PC-3 (cell line): ENCODE measurements at regions of chr7 and their contacts with region 1.

Region 1: DNA sequence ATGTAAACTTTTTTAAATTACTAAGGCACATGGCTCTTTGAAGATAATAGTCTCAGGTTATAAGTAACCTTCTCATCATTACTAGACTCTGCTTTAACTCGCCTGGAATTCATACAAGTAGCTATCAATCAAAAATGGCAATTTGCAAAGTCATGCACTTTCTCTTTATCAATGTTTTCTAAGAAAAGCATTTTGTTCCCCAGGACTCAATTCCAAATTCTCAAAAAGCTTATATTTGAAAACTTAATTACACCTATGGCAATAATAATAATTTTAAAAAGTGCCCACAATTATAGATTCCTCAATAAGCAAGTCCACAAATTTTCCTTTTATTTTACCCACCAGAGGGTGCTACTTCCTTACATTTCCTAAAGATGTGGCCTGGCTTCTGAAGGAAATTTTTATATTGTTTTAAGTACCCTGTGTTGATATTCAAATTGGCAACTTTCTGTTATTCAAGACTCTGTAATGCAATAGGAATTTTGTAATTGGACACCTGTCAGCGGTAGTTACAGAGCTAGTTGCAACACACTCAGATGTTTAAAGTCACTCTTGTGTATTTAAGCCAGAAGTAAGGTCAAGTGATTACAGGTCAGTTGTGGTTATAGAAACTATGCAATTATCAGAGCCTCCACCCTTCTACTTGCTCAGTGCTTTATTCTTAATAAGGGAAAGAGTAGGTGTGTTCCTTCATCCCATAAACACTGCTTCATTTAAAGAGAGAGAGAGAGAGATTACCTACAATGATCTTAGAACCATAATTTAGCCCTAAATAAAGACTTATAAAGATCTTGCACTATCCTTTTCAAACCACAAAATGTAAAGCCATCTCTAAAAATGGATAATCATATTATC is 47.1 kb upstream of the HYAL4 start:
- DNase-seq: peak; percentile 94
- ATAC-seq: peak; percentile 89
- H3K4me3 ChIP-seq: peak overlapping the region; percentile 35; the same call in 1 of the 2 replicates
- H3K27ac ChIP-seq: 0 out of 2 replicates have a peak overlapping the region, but pooled peaks have one; percentile 8
- H3K4me1 ChIP-seq: peaks cover 19% of the 10 kb centered on the region
- H3K27me3 ChIP-seq: no peaks in the 10 kb centered on the region
- CTCF ChIP-seq: peak; percentile 84

Region 2: GRCh38 chr7:123580406-123581161 is 217.3 kb before region 1 on chr7:
- CTCF ChIA-PET with region 1: no interaction called
- POLR2A ChIA-PET with region 1: no interaction called
- intact Hi-C with region 1: loop called (anchors 5 kb)
- DNase-seq: peak; percentile 70
- ATAC-seq: peak; percentile 94
- H3K4me3 ChIP-seq: no peak overlapping the region
- H3K27ac ChIP-seq: no peak overlapping the region
- H3K4me1 ChIP-seq: no peaks in the 10 kb centered on the region
- H3K27me3 ChIP-seq: peaks cover 25% of the 10 kb centered on the region
- CTCF ChIP-seq: peak; percentile 87

Region 3: DNA sequence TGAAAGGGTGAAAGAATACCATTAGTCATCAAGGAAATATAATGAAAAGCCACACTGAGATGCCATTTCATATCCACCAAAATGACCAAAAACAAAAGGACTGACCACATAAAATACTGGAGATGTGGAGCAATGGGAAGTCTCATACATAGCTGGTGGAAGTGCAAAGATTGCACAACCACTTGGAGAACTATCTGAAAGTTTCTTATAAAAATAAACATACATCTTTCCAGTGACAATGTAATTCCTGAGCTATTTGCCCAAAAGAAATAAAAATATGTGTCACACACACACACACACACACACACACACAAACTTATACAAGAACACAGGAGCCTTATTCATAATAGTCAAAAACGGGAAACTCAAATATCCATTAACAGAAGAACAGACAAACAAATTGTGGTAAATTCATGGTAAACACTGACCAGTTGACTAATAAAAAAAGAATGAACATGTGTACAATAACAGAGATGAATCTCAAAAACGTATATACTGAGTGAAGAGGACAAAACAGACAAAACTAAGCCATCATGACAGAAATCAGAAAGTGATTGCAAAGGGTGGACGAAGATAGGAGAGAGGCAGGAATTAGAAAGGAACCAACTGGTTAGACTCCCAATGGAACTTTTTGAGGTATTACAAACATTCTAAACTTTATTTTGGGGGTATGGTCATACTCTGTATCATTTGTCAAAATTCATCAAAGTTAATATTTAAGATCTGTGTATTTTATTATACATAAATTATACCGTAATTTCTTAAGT is 70.6 kb before region 1 on chr7:
- CTCF ChIA-PET with region 1: interaction called, 13 read pairs
- POLR2A ChIA-PET with region 1: no interaction called
- intact Hi-C with region 1: no loop called
- DNase-seq: peak; percentile 74
- ATAC-seq: peak; percentile 84
- H3K4me3 ChIP-seq: peak overlapping the region; percentile 13; the same call in 1 of the 2 replicates
- H3K27ac ChIP-seq: peak overlapping the region; percentile 13
- H3K4me1 ChIP-seq: peaks cover 23% of the 10 kb centered on the region
- H3K27me3 ChIP-seq: no peaks in the 10 kb centered on the region
- CTCF ChIP-seq: no peak

Region 4: GRCh38 chr7:123823898-123824753 is 26.2 kb after region 1 on chr7:
- CTCF ChIA-PET with region 1: no interaction called
- POLR2A ChIA-PET with region 1: no interaction called
- intact Hi-C with region 1: loop called (anchors 2 kb)
- DNase-seq: no peak
- ATAC-seq: no peak
- H3K4me3 ChIP-seq: no peak overlapping the region
- H3K27ac ChIP-seq: no peak overlapping the region
- H3K4me1 ChIP-seq: peaks cover 16% of the 10 kb centered on the region
- H3K27me3 ChIP-seq: no peaks in the 10 kb centered on the region
- CTCF ChIP-seq: no peak

Region 5: DNA sequence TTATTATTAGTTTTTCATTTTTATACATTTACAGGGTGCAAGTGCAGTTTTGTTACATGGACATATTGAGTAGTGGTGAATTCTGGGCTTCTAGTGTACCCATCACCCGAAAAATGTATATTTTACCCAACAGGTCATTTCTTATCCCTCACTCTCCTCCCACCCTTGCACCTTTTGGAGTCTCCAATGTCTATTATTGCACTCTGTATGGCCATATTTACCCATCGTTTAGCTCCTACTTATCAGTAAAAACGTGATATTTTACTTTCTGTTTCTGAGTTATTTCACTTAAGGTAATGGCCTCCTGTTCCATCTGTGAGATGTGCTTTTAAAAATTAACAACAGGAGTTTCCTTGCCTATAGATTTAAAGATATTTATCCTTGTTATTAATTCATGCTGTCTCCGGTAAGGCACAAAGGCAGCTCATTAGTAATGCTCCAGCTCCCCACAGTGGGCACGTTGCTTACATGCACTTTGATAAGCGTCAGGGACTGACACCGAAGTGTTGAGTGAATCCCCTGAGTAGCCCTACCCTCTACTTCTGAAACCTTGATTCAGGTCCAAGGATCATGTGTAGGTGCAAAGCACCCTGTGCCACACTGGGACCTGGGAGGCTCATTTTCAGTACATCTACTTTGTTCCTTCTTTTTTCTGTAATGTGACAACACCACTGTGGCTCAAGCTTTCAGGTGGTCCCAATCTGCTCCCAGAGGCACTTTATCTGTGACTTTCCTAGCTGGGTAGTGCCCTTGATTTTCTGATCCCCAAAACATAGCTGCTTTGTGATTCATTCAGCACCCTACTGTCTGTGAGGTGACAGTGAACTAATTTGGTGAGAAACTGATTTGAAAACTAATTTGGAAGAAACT is 74.3 kb after region 1 on chr7:
- CTCF ChIA-PET with region 1: interaction called, 7 read pairs
- POLR2A ChIA-PET with region 1: no interaction called
- intact Hi-C with region 1: loop called (anchors 1 kb)
- DNase-seq: peak; percentile 76
- ATAC-seq: peak; percentile 98
- H3K4me3 ChIP-seq: no peak overlapping the region
- H3K27ac ChIP-seq: no peak overlapping the region
- H3K4me1 ChIP-seq: peaks cover 12% of the 10 kb centered on the region; the same call in 1 of the 2 replicates
- H3K27me3 ChIP-seq: no peaks in the 10 kb centered on the region
- CTCF ChIP-seq: peak; percentile 86

Region 6: GRCh38 chr7:124152859-124153692 is 355.2 kb after region 1 on chr7:
- CTCF ChIA-PET with region 1: no interaction called
- POLR2A ChIA-PET with region 1: no interaction called
- intact Hi-C with region 1: loop called (anchors 5 kb)
- DNase-seq: peak; percentile 67
- ATAC-seq: peak; percentile 86
- H3K4me3 ChIP-seq: no peak overlapping the region
- H3K27ac ChIP-seq: no peak overlapping the region
- H3K4me1 ChIP-seq: peaks cover 4% of the 10 kb centered on the region; the same call in 1 of the 2 replicates
- H3K27me3 ChIP-seq: no peaks in the 10 kb centered on the region
- CTCF ChIP-seq: peak; percentile 64